PC-3 (cell line): ENCODE measurements at regions of chr20 and their contacts with region 1.

Region 1: DNA sequence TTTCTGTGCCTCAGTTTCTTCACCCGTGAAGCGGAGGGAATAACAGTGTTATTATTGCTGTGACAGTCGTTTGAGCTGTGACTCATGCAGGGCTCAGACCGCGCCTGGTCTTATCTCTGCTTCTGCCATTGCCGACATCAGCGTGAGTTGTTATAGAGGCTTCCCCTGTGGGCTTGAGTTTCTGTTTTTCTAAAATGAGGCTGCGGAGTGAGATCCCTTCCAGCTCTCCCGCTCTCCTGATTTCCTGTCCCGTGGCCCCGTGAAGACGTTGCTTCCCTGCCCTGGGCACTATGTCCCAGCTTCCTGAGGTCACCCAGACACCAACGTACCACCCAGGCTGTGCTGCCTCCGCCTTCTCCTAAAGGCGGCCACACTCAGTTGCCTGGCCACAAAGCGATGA is 278.5 kb downstream of the BMP7 start:
- DNase-seq: peak; percentile 80
- ATAC-seq: peak; percentile 69
- H3K4me3 ChIP-seq: peak overlapping the region; percentile 69
- H3K27ac ChIP-seq: peak overlapping the region; percentile 88
- H3K4me1 ChIP-seq: peaks cover 55% of the 10 kb centered on the region
- H3K27me3 ChIP-seq: no peaks in the 10 kb centered on the region
- CTCF ChIP-seq: no peak

Region 2: GRCh38 chr20:56229812-56230211 is 758.2 kb before region 1 on chr20:
- CTCF ChIA-PET with region 1: no interaction called
- POLR2A ChIA-PET with region 1: no interaction called
- intact Hi-C with region 1: no loop called
- DNase-seq: no peak
- ATAC-seq: no peak
- H3K4me3 ChIP-seq: no peak overlapping the region
- H3K27ac ChIP-seq: no peak overlapping the region
- H3K4me1 ChIP-seq: no peaks in the 10 kb centered on the region
- H3K27me3 ChIP-seq: peaks cover 23% of the 10 kb centered on the region
- CTCF ChIP-seq: no peak

Region 3: DNA sequence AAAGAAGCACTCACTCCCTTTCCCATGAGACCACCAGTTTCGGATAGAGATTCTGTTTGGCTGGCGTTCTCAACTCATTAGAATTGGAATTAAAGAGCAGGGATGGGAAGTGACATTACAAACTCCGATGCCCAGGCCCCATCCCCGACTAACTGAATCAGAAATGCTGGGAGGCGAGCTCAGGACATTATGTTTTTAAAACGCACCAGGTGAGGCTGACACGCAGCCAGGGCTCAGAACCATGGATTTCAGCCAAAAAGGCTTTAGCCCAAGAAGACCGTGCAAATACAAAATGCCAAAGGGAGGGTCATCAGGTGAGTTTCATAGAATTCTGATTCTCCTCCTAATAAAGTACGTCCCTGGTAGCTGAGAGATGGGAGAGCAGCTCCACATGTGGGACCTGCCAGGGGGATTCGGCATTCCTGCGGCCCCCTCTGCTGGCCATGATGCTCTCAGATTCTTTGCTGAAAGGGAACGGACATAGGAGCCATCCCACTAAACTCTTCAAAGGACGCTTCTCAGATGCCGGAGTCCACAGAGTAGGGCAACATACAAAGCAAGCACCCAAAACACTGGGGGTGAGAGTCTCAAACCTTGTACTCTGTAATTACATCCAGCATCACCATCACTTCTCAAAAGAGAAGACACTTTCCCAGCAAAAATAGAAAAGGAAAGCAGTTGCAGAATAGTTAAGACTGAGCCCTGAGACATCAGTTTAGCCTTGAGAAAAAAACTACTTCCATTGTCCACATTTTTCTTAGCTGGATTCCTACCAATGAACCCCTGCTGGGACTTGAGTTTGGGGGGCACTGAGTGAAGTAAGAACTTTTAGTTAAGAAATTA is 73.3 kb after region 1 on chr20:
- CTCF ChIA-PET with region 1: no interaction called
- POLR2A ChIA-PET with region 1: no interaction called
- intact Hi-C with region 1: loop called (anchors 2 kb)
- DNase-seq: peak; percentile 68
- ATAC-seq: peak; percentile 37; the same call in 1 of the 2 replicates
- H3K4me3 ChIP-seq: peak overlapping the region; percentile 20; the same call in 1 of the 2 replicates
- H3K27ac ChIP-seq: peak overlapping the region; percentile 87
- H3K4me1 ChIP-seq: peaks cover 39% of the 10 kb centered on the region
- H3K27me3 ChIP-seq: no peaks in the 10 kb centered on the region
- CTCF ChIP-seq: peak; percentile 83